ENCODE measurements at regions of chr4 and their contacts with region 1.

Region 1: GRCh38 chr4:71009890-71010588 is 16.6 kb downstream of the DCK start:
- DNase-seq: no peak
- ATAC-seq: peak; percentile 55
- H3K4me3 ChIP-seq: no peak overlapping the region
- H3K4me1 ChIP-seq: no peaks in the 10 kb centered on the region
- CTCF ChIP-seq: no peak

Region 2: DNA sequence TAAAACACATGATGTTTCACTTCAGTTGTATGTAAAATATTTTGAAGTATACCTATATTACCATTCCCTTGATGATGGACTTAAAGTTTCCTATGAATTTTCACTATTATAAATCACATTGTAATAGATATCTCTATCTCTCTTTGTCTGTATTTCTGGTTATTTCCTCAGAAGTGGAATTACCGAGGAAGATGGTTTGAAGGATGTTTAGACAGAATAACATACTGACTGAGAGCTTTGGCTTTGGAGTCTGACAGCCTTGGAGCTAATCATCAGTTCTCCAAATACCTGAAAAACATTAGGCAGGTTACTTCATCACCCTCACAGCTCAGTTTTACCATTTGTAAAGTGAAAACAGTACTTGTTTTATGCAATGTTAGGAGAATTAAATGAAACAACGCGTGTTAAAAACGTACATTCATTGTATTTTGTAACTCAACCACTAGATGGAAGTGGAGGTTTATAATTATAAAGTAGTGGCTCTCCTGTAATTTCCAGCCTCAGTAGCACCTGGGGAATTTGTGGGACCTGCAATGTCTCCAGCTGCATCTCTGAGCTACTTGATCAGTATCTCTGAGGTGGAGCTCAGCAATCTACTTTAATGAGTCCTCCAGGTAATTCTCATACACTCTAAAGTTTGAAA is 358.1 kb before region 1 on chr4:
- intact Hi-C with region 1: loop called in 1 of 2 experiments (anchors 10 kb)
- DNase-seq: no peak
- ATAC-seq: peak; percentile 44
- H3K4me3 ChIP-seq: no peak overlapping the region
- H3K4me1 ChIP-seq: no peaks in the 10 kb centered on the region
- CTCF ChIP-seq: no peak

Region 3: DNA sequence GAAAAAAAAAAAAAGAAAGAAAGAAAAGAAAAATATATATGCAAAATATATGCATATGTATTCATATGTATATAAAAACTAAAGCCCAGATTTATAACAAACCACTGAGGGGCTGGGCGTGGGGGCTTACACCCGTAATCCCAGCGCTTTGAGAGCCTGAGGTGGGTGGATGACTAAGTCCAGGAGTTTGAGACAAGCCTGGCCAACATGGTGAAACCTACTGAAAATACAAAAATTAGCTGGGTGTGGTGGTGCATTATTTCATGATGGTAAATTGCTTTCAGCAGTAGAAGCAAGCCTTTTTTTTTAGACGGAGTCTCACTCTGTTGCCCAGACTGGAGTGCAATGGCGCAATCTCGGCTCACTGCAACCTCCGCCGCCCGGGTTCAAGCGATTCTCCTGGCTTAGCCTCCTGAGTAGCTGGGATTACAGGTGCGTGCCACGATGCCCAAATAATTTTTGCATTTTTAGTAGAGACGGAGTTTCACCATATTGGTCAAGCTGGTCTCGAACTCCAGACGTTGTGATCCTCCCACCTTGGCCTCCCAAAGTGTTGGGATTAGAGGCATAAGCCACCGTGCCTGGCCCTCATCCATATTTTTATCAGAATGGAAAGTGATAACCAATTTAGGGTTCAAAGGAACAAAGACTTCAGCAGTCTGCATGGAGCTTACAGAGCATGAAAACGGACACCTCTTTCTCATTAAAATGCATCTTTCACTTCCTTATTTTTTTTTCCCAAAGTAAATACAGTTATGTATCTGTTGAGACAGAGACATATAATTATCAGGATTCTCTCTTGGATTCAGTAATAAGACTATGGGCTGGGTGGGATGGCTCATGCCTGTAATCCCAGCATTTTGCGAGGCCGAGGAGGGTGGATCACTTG is 135.5 kb before region 1 on chr4:
- intact Hi-C with region 1: no loop called
- DNase-seq: no peak
- ATAC-seq: no peak
- H3K4me3 ChIP-seq: no peak overlapping the region
- H3K4me1 ChIP-seq: no peaks in the 10 kb centered on the region
- CTCF ChIP-seq: no peak